Ovary (tissue), 10 donors: ENCODE measurements at regions of chr18 and their contacts with region 1.

Region 1: GRCh38 chr18:78670778-78671405 is 308.7 kb upstream of the SALL3 start:
- DNase-seq: no peak
- H3K4me3 ChIP-seq: no peak overlapping the region
- H3K27ac ChIP-seq: no peak overlapping the region
- H3K4me1 ChIP-seq: no peaks in the 10 kb centered on the region
- H3K27me3 ChIP-seq: no peaks in the 10 kb centered on the region
- CTCF ChIP-seq: no peak
- EP300 ChIP-seq: no peak
- POLR2A ChIP-seq: no peak

Region 2: DNA sequence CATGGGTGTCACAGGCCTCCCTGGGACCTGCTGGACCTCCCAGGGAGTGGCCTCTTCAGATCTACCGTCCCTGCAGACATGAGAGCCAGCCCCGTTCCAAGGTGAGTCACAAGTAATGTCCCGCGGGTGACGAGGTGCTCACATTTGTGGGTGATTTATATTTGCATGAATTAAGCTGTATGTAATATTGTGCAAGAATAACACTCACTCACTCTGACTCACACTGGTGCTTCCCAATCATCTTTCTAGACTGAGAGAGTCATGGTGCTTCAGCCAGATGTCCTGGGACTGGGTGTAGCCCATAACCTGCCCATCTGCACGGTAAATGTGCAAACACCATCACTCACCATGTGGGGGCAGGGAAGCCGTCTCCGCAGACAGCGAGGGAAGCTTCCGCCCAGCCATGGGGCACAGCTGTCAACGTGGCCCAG is 38.8 kb before region 1 on chr18:
- intact Hi-C with region 1: no loop called
- DNase-seq: no peak
- H3K4me3 ChIP-seq: no peak overlapping the region
- H3K27ac ChIP-seq: no peak overlapping the region
- H3K4me1 ChIP-seq: no peaks in the 10 kb centered on the region
- H3K27me3 ChIP-seq: no peaks in the 10 kb centered on the region
- CTCF ChIP-seq: no peak
- EP300 ChIP-seq: no peak
- POLR2A ChIP-seq: no peak

Region 3: DNA sequence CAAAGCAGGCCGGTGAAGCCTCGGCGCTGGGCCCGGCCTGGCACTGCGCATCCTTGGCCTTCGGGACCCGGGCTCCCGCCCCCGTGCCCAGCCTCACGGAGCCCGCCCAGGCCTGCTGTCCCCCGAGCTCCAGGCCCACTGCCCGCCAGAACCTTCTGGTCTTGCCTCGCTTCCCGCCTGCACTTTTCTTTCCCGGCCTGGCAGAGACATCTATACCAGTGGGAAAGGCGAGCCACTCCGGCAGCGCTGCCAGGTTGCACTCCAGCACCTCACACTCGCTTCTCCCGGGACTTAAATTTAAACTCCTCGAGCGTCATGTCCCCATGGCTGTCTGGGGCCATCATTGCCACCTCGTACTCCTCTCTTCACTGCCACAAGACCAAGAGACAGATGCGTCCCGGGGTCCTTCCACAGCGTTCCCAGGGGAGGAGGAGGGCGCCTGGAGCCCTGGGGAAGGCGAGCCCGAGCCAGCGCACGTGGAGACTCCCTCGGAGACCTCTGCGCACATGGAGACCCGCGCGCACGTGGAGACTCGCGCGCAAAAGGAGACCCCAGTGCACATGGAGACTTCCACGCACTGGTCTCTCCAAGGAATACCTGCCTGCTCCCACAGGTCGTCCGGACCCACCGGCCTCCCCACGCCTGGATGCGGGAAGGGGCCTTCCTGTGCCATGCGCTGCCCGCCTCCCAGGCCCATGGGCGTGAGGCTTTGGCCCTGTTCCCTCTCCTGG is 55.6 kb after region 1 on chr18:
- intact Hi-C with region 1: loop called in 1 of 4 experiments (anchors 2 kb)
- DNase-seq: no peak
- H3K4me3 ChIP-seq: no peak overlapping the region
- H3K27ac ChIP-seq: no peak overlapping the region
- H3K4me1 ChIP-seq: no peaks in the 10 kb centered on the region
- H3K27me3 ChIP-seq: no peaks in the 10 kb centered on the region
- CTCF ChIP-seq: no peak
- EP300 ChIP-seq: no peak
- POLR2A ChIP-seq: no peak

Region 4: GRCh38 chr18:78813936-78814710 is 143.2 kb after region 1 on chr18:
- intact Hi-C with region 1: no loop called
- DNase-seq: no peak
- H3K4me3 ChIP-seq: no peak overlapping the region
- H3K27ac ChIP-seq: no peak overlapping the region
- H3K4me1 ChIP-seq: no peaks in the 10 kb centered on the region
- H3K27me3 ChIP-seq: no peaks in the 10 kb centered on the region
- CTCF ChIP-seq: no peak
- EP300 ChIP-seq: no peak
- POLR2A ChIP-seq: no peak